Heart left ventricle (tissue), 16 donors: ENCODE measurements at regions of chr17 and their contacts with region 1.

Region 1: DNA sequence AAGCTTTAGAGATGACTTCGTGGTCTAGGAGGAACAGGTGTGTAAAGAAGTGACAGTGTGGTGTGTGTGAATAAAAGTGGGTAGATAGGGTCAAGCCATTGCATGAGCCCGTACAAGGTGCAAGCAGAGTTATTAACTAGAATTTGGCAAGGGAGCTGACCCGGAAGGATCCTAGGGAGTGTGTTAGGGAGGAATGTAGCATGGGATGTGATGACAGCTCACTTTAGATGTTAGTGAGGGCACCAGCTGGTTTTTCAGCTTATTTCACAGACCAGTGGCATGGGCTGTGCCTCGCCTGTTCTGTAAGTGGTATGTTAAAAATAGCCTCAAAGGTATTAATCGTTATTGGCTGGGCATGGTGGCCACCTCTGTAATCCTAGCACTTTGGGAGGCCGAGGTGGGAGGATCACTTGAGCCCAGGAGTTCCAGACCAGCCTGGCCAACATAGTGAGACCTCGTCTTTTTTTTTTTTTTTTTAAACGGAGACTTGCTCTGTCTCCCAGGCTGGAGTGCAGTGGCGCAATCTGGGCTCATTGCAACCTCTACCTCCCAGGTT is 8.3 kb downstream of the ANKRD40CL start:
- DNase-seq: no peak
- ATAC-seq: peak in 1 of 4 donors; percentile 30
- H3K4me3 ChIP-seq: no peak overlapping the region
- H3K27ac ChIP-seq: no peak overlapping the region
- H3K4me1 ChIP-seq: peaks cover 0 to 18% (median 8%) of the 10 kb centered on the region in 12 donors
- H3K27me3 ChIP-seq: no peaks in the 10 kb centered on the region
- CTCF ChIP-seq: no peak
- POLR2A ChIP-seq: no peak

Region 2: GRCh38 chr17:50686494-50687199 is 72.4 kb before region 1 on chr17:
- intact Hi-C with region 1: loop called in 1 of 10 experiments (anchors 10 kb)
- DNase-seq: peak in 3 of 5 donors; percentile 43 to 82 (median 63)
- ATAC-seq: peak; percentile 76 to 88 (median 82)
- H3K4me3 ChIP-seq: no peak overlapping the region
- H3K27ac ChIP-seq: peak overlapping the region in 8 of 12 donors; percentile 2 to 82 (median 46)
- H3K4me1 ChIP-seq: peaks cover 0 to 23% (median 11%) of the 10 kb centered on the region in 12 donors
- H3K27me3 ChIP-seq: no peaks in the 10 kb centered on the region
- CTCF ChIP-seq: no peak
- POLR2A ChIP-seq: no peak

Region 3: DNA sequence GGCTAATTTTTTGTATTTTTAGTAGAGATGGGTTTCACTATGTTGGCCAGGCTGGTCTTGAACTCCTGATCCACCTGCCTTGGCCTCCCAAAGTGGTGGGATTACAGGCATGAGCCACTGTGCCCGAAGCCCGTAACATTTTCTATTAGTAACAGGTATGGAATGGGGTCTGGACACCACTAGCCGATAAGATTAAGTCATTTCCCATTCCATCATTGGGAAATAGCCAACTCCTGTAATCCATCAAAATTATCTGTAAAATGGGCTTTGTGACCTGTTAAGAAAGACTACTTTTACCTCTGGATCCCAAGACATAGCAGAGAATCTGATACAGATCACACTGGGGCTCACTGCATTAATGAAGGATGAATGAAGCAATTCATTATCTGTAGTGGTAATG is 43.6 kb before region 1 on chr17:
- intact Hi-C with region 1: no loop called
- DNase-seq: no peak
- ATAC-seq: no peak
- H3K4me3 ChIP-seq: no peak overlapping the region
- H3K27ac ChIP-seq: no peak overlapping the region
- H3K4me1 ChIP-seq: peaks cover 0 to 15% (median 5%) of the 10 kb centered on the region in 12 donors
- H3K27me3 ChIP-seq: no peaks in the 10 kb centered on the region
- CTCF ChIP-seq: no peak
- POLR2A ChIP-seq: no peak

Region 4: DNA sequence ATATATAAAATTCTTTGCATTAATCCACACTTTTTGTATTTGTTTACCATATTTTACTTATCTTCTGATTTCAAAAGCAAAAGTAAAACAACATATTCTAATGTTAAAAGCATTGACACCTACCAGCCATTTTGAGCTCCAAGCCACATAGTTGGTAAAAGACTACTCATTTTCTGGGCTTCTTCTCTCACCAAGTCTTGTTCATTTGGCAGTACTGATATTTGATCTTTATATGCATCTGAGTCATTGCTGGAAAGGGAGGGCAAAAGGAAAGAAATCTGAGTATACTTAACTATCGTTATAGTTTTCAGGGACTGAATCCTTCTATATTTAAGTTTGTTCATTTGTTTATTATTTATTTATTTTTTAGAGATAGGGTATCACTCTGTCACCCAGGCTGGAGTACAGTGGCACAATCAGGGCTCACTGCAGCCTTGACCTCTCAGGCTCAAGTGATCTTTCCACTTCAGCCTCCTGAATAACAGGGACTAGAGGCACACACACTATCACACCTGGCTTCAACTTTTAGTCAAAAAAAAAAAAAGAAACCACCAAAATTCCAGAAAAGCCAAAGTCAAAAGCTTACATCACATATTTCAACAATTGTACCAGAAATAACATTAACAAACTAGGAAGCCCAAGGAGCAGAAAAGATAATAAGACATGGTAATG is 228.1 kb after region 1 on chr17:
- intact Hi-C with region 1: loop called in 1 of 10 experiments (anchors 10 kb)
- DNase-seq: no peak
- ATAC-seq: no peak
- H3K4me3 ChIP-seq: no peak overlapping the region
- H3K27ac ChIP-seq: no peak overlapping the region
- H3K4me1 ChIP-seq: no peaks in the 10 kb centered on the region
- H3K27me3 ChIP-seq: no peaks in the 10 kb centered on the region
- CTCF ChIP-seq: no peak
- POLR2A ChIP-seq: no peak